T-cell (primary cell): ENCODE measurements at regions of chr14 and their contacts with region 1.

Region 1: GRCh38 chr14:74793506-74794168 is 30.5 kb downstream of the YLPM1 start:
- DNase-seq: peak in 4 of 35 experiments; percentile 11 to 53 (median 14)
- ATAC-seq: peak in 1 of 4 experiments; percentile 64
- H3K4me3 ChIP-seq: no peak overlapping the region
- H3K4me3 Mint-ChIP-seq: peak overlapping the region; percentile 53 to 76 (median 55)
- H3K27ac ChIP-seq: peak overlapping the region; percentile 9
- H3K27ac Mint-ChIP-seq: peak overlapping the region; percentile 83 to 87
- H3K4me1 ChIP-seq: peaks cover 13 to 20% of the 10 kb centered on the region in 2 experiments
- H3K4me1 Mint-ChIP-seq: peaks cover 49 to 61% (median 55%) of the 10 kb centered on the region in 3 donors
- H3K27me3 ChIP-seq: no peaks in the 10 kb centered on the region
- H3K27me3 Mint-ChIP-seq: no peaks in the 10 kb centered on the region

Region 2: DNA sequence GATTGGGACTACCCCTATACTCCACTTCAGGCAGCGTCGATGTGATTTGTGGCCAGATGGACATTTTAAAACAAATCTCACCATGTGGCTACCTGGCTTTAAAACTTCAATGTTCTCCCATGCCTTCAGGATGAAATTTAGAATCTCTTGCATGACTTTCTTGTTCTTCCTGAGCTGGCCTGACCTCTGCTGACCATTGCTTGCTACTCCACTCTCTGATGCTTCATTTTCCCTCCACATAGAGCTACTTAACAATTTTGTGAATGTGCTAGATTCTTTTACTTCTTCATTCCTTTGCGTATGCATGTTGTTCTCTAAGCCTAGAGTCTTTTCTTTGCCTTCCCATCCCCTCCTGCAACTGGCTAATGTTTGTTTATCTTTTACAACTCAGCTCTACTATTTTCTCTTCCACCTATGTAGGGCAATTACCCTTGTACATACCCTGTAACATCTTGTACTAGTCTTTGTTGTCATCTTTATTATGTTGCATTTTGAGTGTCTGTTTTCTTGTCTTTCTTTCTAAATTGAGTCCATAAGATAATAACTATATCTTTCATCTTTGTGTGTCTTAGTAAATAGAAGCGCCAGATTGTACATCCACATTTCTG is 10.7 kb after region 1 on chr14:
- CTCF ChIA-PET with region 1: no interaction called
- POLR2A ChIA-PET with region 1: no interaction called
- DNase-seq: peak in 21 of 35 experiments; percentile 8 to 41 (median 21)
- ATAC-seq: no peak
- H3K4me3 ChIP-seq: no peak overlapping the region
- H3K4me3 Mint-ChIP-seq: no peak overlapping the region
- H3K27ac ChIP-seq: no peak overlapping the region
- H3K27ac Mint-ChIP-seq: no peak overlapping the region
- H3K4me1 ChIP-seq: no peaks in the 10 kb centered on the region
- H3K4me1 Mint-ChIP-seq: peaks cover 7 to 12% (median 9%) of the 10 kb centered on the region in 3 donors
- H3K27me3 ChIP-seq: no peaks in the 10 kb centered on the region
- H3K27me3 Mint-ChIP-seq: no peaks in the 10 kb centered on the region

Region 3: GRCh38 chr14:74820288-74820687 is 26.7 kb after region 1 on chr14:
- CTCF ChIA-PET with region 1: no interaction called
- POLR2A ChIA-PET with region 1: no interaction called
- DNase-seq: no peak
- ATAC-seq: no peak
- H3K4me3 ChIP-seq: no peak overlapping the region
- H3K4me3 Mint-ChIP-seq: no peak overlapping the region
- H3K27ac ChIP-seq: no peak overlapping the region
- H3K27ac Mint-ChIP-seq: peak overlapping the region in 1 of 2 donors; percentile 5
- H3K4me1 ChIP-seq: no peaks in the 10 kb centered on the region
- H3K4me1 Mint-ChIP-seq: peaks cover 0 to 18% (median 9%) of the 10 kb centered on the region in 3 donors
- H3K27me3 ChIP-seq: no peaks in the 10 kb centered on the region
- H3K27me3 Mint-ChIP-seq: no peaks in the 10 kb centered on the region

Region 4: DNA sequence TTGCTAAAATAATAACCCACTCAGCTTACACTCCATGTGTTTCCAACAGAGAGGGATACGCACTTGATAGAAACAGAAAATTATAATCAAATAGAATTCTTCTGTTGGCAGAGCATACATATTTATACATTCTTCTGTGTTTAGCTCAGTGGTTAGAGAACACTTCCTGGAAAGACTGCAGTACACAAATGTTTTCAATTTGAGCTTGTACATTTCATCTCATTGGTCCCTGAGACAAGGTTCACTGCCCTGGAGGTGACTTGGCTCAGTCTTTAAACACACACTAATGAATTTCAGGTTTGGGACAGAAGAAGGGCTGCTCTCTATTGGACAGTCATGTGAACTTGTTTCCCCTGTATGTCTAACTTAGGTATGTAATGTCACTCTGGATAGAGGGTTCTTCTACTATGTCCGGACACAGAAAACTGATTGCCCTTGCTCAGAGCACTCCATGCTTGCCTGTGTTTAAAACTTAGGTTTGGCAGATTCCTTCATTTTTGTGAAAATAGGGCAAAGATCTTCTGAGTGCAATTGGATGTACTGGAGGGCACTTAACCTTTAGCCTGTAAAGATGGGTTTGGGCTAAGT is 59.4 kb after region 1 on chr14:
- CTCF ChIA-PET with region 1: no interaction called
- POLR2A ChIA-PET with region 1: no interaction called
- DNase-seq: no peak
- ATAC-seq: peak; percentile 37 to 51 (median 50)
- H3K4me3 ChIP-seq: no peak overlapping the region
- H3K4me3 Mint-ChIP-seq: peak overlapping the region in 1 of 3 donors; percentile 10
- H3K27ac ChIP-seq: no peak overlapping the region
- H3K27ac Mint-ChIP-seq: peak overlapping the region; percentile 19 to 58
- H3K4me1 ChIP-seq: peaks cover 11% of the 10 kb centered on the region in 2 experiments
- H3K4me1 Mint-ChIP-seq: peaks cover 26 to 37% (median 27%) of the 10 kb centered on the region in 3 donors
- H3K27me3 ChIP-seq: no peaks in the 10 kb centered on the region
- H3K27me3 Mint-ChIP-seq: no peaks in the 10 kb centered on the region

Region 5: DNA sequence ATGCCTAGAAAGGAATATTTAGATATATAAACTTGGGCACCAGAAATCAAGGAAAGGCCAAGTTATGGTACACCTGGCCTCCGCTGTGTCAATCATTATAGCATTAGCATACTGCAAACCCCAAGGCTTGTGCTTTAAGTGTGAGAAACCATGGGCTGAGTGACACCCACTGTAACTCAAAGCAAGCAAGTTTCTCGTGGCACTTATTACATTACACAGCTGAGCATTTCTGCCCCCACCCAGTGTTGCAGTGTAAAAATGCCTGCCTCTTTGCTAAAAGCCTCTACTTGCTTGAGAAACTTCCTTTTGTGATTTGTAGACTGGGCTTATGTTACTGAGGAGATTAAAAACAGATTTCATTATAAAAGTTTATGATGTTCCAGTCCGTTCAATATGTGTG is 1066.1 kb after region 1 on chr14:
- CTCF ChIA-PET with region 1: interaction called in 1 of 2 experiments, 13 read pairs
- POLR2A ChIA-PET with region 1: no interaction called
- DNase-seq: no peak
- ATAC-seq: no peak
- H3K4me3 ChIP-seq: no peak overlapping the region
- H3K4me3 Mint-ChIP-seq: no peak overlapping the region
- H3K27ac ChIP-seq: no peak overlapping the region
- H3K27ac Mint-ChIP-seq: no peak overlapping the region
- H3K4me1 ChIP-seq: no peaks in the 10 kb centered on the region
- H3K4me1 Mint-ChIP-seq: no peaks in the 10 kb centered on the region
- H3K27me3 ChIP-seq: no peaks in the 10 kb centered on the region
- H3K27me3 Mint-ChIP-seq: no peaks in the 10 kb centered on the region